ENCODE measurements at regions of chr3 and their contacts with region 1.

Region 1: DNA sequence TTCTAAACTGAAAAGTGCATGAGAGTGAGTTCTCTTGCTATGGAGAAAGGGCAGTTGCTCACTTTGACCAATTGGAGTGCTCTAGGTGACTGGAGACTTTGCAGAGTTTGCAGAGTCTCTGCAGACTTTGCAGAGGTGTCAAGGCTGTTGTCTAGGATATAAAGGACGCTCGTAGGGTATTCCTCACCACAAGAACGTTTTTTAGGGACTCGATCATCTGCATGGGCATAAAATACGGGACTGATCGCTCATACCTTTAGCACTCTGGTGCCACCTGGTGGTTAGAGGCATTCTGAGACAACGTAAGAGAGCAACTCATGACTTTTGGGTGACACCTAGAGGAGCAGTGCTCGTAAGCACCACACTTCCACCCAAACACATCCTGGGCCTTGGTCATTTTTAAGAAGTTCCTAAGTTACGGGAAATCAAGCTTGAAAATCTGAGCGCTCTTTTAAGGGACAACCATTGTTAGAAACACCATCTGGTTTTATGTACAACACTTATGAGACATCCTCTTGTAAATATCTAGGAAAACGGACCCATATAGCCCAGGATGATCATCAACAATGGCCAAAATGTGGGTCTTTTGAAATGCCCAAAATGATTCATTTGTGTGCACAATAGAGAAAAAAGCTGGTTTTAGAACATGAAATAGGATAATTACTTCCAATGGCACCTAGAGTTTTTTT is 51.6 kb upstream of the XCR1 start:
- H3K4me3 ChIP-seq: no peak overlapping the region
- H3K27ac ChIP-seq: no peak overlapping the region
- H3K4me1 ChIP-seq: no peaks in the 10 kb centered on the region
- CTCF ChIP-seq: peak; percentile 93

Region 2: DNA sequence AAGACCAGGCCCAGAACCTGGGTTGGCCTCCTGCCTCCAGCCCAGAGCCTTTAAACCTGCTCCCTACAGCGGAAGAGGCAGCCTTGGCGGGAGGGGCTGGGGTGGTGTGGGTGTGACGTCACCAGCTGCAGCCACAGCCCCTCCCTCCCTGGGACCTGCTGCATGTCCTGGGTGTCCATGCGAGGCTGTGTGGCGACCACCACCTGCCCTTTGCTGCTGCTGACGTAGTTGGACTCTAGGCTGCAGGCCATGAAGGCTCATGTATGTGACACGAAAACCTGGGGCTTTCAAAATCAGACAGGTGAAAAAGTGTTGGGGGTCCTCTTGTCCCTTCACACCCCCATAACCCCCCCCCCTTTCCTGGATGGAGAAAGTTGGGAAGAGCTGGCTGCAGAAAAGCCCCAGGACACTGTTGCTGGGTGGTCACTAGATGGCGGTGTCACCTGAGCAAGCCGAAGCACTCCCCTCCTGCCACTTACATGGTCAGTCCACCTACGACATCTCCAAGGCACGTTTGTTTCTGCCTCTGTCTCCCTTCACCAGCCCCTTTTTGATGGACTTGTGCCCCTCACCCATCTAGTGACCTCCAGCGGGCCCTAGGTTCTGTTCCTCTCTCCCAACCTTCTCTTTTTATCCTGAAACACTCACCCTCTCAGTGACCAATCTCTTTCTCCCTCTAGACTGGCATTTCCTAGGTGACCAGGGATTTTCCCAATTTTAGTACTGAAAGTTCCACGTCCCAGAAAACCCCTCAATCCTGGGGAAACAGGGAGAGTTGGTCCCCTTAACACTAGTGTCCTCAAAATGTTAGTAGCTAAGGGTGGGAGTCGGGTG is 317.8 kb before region 1 on chr3:
- CTCF ChIA-PET with region 1: interaction called, 17 read pairs
- POLR2A ChIA-PET with region 1: no interaction called
- H3K4me3 ChIP-seq: no peak overlapping the region
- H3K27ac ChIP-seq: no peak overlapping the region
- H3K4me1 ChIP-seq: no peaks in the 10 kb centered on the region
- CTCF ChIP-seq: peak; percentile 43; the same call in 1 of the 2 replicates

Region 3: GRCh38 chr3:45938864-45939263 is 140.0 kb before region 1 on chr3:
- CTCF ChIA-PET with region 1: interaction called, 80 read pairs
- POLR2A ChIA-PET with region 1: no interaction called
- H3K4me3 ChIP-seq: no peak overlapping the region
- H3K27ac ChIP-seq: no peak overlapping the region
- H3K4me1 ChIP-seq: no peaks in the 10 kb centered on the region
- CTCF ChIP-seq: 0 out of 2 replicates have a peak, but pooled peaks have one; percentile 20

Region 4: GRCh38 chr3:46065294-46065721 is 13.5 kb before region 1 on chr3:
- CTCF ChIA-PET with region 1: interaction called, 56 read pairs
- POLR2A ChIA-PET with region 1: no interaction called
- H3K4me3 ChIP-seq: no peak overlapping the region
- H3K27ac ChIP-seq: no peak overlapping the region
- H3K4me1 ChIP-seq: peaks cover 7% of the 10 kb centered on the region
- CTCF ChIP-seq: no peak

Region 5: GRCh38 chr3:46208167-46208704 is 129.4 kb after region 1 on chr3 and contains the start of gene CCR1:
- CTCF ChIA-PET with region 1: interaction called, 12 read pairs
- POLR2A ChIA-PET with region 1: no interaction called
- H3K4me3 ChIP-seq: no peak within 1 kb of the TSS
- H3K27ac ChIP-seq: no peak within 1 kb of the TSS
- H3K4me1 ChIP-seq: no peaks in the 10 kb centered on the region
- CTCF ChIP-seq: no peak

Measured in HEK293 (cell line).